Activated CD8-positive, alpha-beta memory T cell treated with anti-CD3 and anti-CD28 coated beads, Interleukin-2, amount 10 ng/mL, durations not matched to agents 7 days and 5 days (primary cell): ENCODE measurements at regions of chr3 and their contacts with region 1.

Region 1: GRCh38 chr3:123028233-123028828 is 768 bp upstream of the SEMA5B start:
- DNase-seq: peak; percentile 47
- ATAC-seq: peak; percentile 43
- H3K4me3 Mint-ChIP-seq: peak overlapping the region; percentile 41
- H3K27ac Mint-ChIP-seq: no peak overlapping the region
- H3K4me1 Mint-ChIP-seq: peaks cover 12% of the 10 kb centered on the region
- H3K27me3 Mint-ChIP-seq: peaks cover 42% of the 10 kb centered on the region

Region 2: GRCh38 chr3:122754929-122755328 is 273.4 kb before region 1 on chr3:
- CTCF ChIA-PET with region 1: interaction called, 11 read pairs
- DNase-seq: no peak
- ATAC-seq: peak; percentile 82
- H3K4me3 Mint-ChIP-seq: no peak overlapping the region
- H3K27ac Mint-ChIP-seq: no peak overlapping the region
- H3K4me1 Mint-ChIP-seq: peaks cover 14% of the 10 kb centered on the region
- H3K27me3 Mint-ChIP-seq: no peaks in the 10 kb centered on the region

Region 3: DNA sequence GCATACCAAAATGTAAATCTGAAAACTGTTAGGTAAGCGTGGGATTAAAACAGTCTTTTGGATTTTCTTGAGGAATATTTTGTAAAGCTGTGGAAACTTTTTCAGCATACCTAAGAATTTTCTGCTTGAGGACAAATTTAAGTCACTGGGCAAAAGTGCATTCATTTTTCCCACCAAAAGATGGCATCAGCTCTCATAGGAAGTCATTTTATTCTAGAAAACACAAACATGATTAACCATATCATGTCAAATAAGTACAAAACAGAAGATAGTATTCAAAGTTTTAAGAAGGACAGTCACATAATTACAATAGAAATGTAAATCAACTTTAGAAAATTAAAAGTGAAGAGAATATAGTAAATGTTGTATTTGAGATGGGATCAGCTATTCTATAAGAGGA is 170.0 kb before region 1 on chr3:
- CTCF ChIA-PET with region 1: interaction called, 14 read pairs
- DNase-seq: no peak
- ATAC-seq: no peak
- H3K4me3 Mint-ChIP-seq: no peak overlapping the region
- H3K27ac Mint-ChIP-seq: no peak overlapping the region
- H3K4me1 Mint-ChIP-seq: no peaks in the 10 kb centered on the region
- H3K27me3 Mint-ChIP-seq: no peaks in the 10 kb centered on the region

Region 4: DNA sequence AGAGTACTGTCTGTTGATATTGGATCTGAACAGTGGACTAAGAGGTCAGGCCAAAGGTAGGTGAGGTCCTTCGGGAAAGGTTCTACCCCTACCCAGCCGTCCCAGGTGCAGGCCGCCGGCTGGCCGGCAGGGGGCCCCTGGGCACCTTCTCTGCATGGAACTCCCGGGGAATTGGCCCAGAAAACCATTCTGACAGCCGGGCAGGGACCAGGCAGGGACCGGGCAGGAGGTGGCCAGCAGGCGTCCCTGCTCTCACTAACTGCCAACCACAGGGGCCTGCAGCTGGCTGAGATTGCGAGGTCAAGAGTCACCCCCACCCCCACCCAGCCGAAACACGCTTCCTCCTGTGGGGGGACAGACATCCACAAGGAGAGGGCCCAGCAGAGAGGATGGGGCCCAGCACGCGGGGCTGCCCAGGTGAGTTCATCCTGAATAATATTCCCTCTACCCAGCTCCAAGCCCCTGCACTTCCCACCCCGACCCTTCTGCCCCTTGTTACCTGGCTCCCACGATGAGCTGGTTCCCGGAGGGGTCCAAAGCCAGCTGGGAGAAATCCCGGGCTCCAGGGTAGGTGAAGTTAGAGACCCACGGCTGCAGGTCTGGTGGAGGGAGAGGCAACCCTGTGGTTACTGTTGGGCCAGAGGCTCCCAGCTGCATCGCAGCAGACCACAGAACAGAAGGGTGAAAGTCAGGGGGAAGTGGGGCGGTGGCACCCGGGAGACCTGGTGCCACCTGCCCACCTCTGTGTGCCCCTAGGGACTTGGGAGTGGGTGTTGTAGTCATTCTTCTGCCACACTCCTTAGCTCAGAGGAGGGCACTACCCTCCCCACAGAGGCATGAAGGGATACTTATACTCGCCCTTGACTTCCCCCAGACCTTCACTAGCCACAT is 85.1 kb before region 1 on chr3:
- CTCF ChIA-PET with region 1: interaction called, 55 read pairs
- DNase-seq: no peak
- ATAC-seq: peak; percentile 43
- H3K4me3 Mint-ChIP-seq: no peak overlapping the region
- H3K27ac Mint-ChIP-seq: no peak overlapping the region
- H3K4me1 Mint-ChIP-seq: peaks cover 10% of the 10 kb centered on the region
- H3K27me3 Mint-ChIP-seq: peaks cover 31% of the 10 kb centered on the region

Region 5: DNA sequence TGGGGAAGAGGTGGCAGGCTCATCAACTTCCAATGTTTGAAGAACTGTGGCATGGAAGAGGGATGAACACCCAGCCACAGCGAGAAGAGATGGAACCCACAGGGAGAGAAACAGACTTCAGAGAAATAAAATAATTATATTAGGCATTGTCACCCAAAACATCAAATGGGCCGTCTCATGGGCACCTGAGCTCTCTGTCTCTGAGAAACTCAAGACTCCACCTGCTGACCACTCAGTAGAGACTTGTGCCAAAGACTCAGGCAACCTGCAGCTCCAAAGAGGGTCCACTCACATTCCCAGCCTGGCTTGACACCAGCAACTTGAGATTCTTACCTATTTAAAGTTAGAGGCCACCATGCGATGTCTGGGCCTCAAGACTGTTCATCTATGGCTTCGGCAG is 12.8 kb before region 1 on chr3:
- CTCF ChIA-PET with region 1: interaction called, 13 read pairs
- DNase-seq: no peak
- ATAC-seq: no peak
- H3K4me3 Mint-ChIP-seq: no peak overlapping the region
- H3K27ac Mint-ChIP-seq: no peak overlapping the region
- H3K4me1 Mint-ChIP-seq: no peaks in the 10 kb centered on the region
- H3K27me3 Mint-ChIP-seq: peaks cover 59% of the 10 kb centered on the region

Region 6: DNA sequence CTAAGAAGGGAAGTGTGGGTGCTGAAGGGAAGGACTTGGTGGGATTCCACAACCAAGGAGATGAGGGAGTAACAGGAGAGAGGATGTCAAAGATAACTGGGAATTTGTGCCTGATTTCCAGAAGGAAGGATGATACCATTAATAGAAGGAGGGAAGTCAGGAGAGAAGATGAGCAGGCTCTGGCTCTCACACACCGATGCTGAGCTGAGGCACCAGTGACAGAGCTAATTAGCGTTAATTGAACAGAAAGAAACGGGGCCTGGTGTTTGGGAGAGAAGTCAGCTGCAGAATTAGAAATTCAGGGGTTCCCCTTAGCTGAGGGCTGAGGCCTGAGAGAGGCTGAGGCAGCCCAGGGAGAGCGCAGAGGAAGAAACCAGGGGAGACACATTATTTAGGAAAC is 26.6 kb after region 1 on chr3:
- CTCF ChIA-PET with region 1: no interaction called
- DNase-seq: no peak
- ATAC-seq: no peak
- H3K4me3 Mint-ChIP-seq: no peak overlapping the region
- H3K27ac Mint-ChIP-seq: no peak overlapping the region
- H3K4me1 Mint-ChIP-seq: no peaks in the 10 kb centered on the region
- H3K27me3 Mint-ChIP-seq: peaks cover 19% of the 10 kb centered on the region

Region 7: DNA sequence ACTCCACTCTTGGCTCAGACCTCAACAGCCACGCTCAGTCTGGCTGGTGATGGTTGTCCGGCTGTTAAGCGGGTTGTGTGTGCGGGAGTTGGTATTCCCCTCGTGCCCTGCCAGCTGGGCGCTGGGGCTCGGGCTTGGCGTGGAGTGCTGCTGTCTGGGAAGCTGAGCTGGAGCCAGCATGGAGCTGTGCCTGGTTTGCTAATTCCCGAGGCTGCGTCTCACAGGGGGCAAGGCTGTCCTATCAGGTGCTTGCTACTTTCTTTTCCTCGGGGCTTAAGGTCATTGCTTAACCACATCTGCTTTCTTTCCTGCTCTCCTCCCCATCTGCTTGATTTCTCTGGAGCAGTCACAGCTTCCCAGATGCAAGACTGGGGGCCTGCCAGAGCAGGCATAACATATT is 68.4 kb after region 1 on chr3:
- CTCF ChIA-PET with region 1: no interaction called
- DNase-seq: no peak
- ATAC-seq: no peak
- H3K4me3 Mint-ChIP-seq: no peak overlapping the region
- H3K27ac Mint-ChIP-seq: no peak overlapping the region
- H3K4me1 Mint-ChIP-seq: no peaks in the 10 kb centered on the region
- H3K27me3 Mint-ChIP-seq: no peaks in the 10 kb centered on the region

Region 8: GRCh38 chr3:123122525-123123315 is 94.4 kb after region 1 on chr3:
- CTCF ChIA-PET with region 1: no interaction called
- DNase-seq: no peak
- ATAC-seq: no peak
- H3K4me3 Mint-ChIP-seq: no peak overlapping the region
- H3K27ac Mint-ChIP-seq: no peak overlapping the region
- H3K4me1 Mint-ChIP-seq: no peaks in the 10 kb centered on the region
- H3K27me3 Mint-ChIP-seq: no peaks in the 10 kb centered on the region

Region 9: DNA sequence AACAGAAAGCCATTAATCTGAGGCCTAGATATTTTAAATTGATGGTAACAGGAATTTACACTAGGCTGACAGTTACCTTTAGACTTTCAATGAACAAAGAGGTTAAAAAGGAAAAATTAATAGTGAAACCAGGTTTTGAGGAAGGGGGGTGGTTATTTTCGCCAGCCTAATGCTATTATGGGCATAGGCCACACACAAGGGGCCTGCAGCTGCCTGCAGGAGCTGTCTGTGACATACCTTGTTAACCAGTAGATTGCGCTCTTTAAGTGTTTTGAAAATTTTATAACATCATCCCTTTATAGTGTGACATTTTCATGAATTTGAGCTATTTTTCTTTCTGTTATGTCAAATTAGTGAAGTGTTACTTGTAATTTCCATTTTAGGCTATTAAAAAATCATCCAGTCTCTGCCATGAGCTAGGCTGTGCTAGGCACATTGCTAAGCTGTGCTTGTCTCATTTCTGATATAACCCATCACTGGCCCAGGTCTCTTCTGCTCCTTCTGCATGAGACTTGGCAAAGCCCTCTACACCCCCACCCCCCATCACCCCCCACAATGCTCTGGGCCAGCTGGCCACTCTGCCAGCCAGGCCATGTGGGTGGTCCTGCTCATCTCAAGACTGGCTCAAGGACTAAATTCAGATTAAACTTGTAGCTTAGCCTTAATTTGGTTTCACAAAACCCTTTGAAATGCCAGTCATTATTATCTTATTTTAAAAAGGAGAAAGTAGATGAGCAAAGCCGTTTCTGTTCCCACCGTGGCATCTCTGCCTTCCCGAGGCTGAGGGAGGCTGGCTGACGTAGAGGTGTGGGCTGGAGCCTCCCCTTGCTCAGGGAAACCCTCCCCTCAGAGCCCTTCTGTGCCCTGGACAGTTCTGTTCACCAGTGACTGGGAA is 125.0 kb after region 1 on chr3:
- CTCF ChIA-PET with region 1: no interaction called
- DNase-seq: peak; percentile 21
- ATAC-seq: no peak
- H3K4me3 Mint-ChIP-seq: no peak overlapping the region
- H3K27ac Mint-ChIP-seq: no peak overlapping the region
- H3K4me1 Mint-ChIP-seq: no peaks in the 10 kb centered on the region
- H3K27me3 Mint-ChIP-seq: no peaks in the 10 kb centered on the region